MCF 10A (cell line): ENCODE measurements at regions of chr5 and their contacts with region 1.

Region 1: GRCh38 chr5:136212252-136212721 is 19.3 kb upstream of the SMIM32 start:
- DNase-seq: peak; percentile 73
- H3K4me3 Mint-ChIP-seq: no peak overlapping the region
- H3K27ac Mint-ChIP-seq: no peak overlapping the region
- H3K4me1 Mint-ChIP-seq: peaks cover 5% of the 10 kb centered on the region
- H3K27me3 Mint-ChIP-seq: peaks cover 13% of the 10 kb centered on the region
- CTCF ChIP-seq: peak; percentile 96

Region 2: GRCh38 chr5:135880278-135880677 is 332.0 kb before region 1 on chr5:
- CTCF ChIA-PET with region 1: interaction called, 37 read pairs
- POLR2A ChIA-PET with region 1: no interaction called
- intact Hi-C with region 1: no loop called
- DNase-seq: peak; percentile 45
- H3K4me3 Mint-ChIP-seq: no peak overlapping the region
- H3K27ac Mint-ChIP-seq: no peak overlapping the region
- H3K4me1 Mint-ChIP-seq: peaks cover 10% of the 10 kb centered on the region
- H3K27me3 Mint-ChIP-seq: peaks cover 32% of the 10 kb centered on the region
- CTCF ChIP-seq: peak; percentile 10

Region 3: GRCh38 chr5:135895551-135895950 is 316.7 kb before region 1 on chr5 and contains the start of gene IL9:
- CTCF ChIA-PET with region 1: interaction called, 23 read pairs
- POLR2A ChIA-PET with region 1: interaction called, 4 read pairs
- intact Hi-C with region 1: no loop called
- DNase-seq: no peak
- H3K4me3 Mint-ChIP-seq: no peak within 1 kb of the TSS
- H3K27ac Mint-ChIP-seq: no peak within 1 kb of the TSS
- H3K4me1 Mint-ChIP-seq: no peaks in the 10 kb centered on the region
- H3K27me3 Mint-ChIP-seq: peaks cover 64% of the 10 kb centered on the region
- CTCF ChIP-seq: no peak
- total RNA-seq, gene IL9: not detected in 2 replicates

Region 4: GRCh38 chr5:135944967-135945560 is 267.2 kb before region 1 on chr5:
- CTCF ChIA-PET with region 1: interaction called, 16 read pairs
- POLR2A ChIA-PET with region 1: no interaction called
- intact Hi-C with region 1: no loop called
- DNase-seq: peak; percentile 94
- H3K4me3 Mint-ChIP-seq: no peak overlapping the region
- H3K27ac Mint-ChIP-seq: no peak overlapping the region
- H3K4me1 Mint-ChIP-seq: no peaks in the 10 kb centered on the region
- H3K27me3 Mint-ChIP-seq: no peaks in the 10 kb centered on the region
- CTCF ChIP-seq: peak; percentile 80

Region 5: GRCh38 chr5:136155761-136156160 is 56.5 kb before region 1 on chr5:
- CTCF ChIA-PET with region 1: interaction called, 10 read pairs
- POLR2A ChIA-PET with region 1: no interaction called
- intact Hi-C with region 1: no loop called
- DNase-seq: peak; percentile 48
- H3K4me3 Mint-ChIP-seq: no peak overlapping the region
- H3K27ac Mint-ChIP-seq: no peak overlapping the region
- H3K4me1 Mint-ChIP-seq: peaks cover 24% of the 10 kb centered on the region
- H3K27me3 Mint-ChIP-seq: no peaks in the 10 kb centered on the region
- CTCF ChIP-seq: no peak

Region 6: GRCh38 chr5:136195971-136196820 is 16.1 kb before region 1 on chr5:
- CTCF ChIA-PET with region 1: interaction called, 65 read pairs
- POLR2A ChIA-PET with region 1: no interaction called
- intact Hi-C with region 1: no loop called
- DNase-seq: no peak
- H3K4me3 Mint-ChIP-seq: no peak overlapping the region
- H3K27ac Mint-ChIP-seq: no peak overlapping the region
- H3K4me1 Mint-ChIP-seq: no peaks in the 10 kb centered on the region
- H3K27me3 Mint-ChIP-seq: peaks cover 34% of the 10 kb centered on the region
- CTCF ChIP-seq: no peak

Region 7: DNA sequence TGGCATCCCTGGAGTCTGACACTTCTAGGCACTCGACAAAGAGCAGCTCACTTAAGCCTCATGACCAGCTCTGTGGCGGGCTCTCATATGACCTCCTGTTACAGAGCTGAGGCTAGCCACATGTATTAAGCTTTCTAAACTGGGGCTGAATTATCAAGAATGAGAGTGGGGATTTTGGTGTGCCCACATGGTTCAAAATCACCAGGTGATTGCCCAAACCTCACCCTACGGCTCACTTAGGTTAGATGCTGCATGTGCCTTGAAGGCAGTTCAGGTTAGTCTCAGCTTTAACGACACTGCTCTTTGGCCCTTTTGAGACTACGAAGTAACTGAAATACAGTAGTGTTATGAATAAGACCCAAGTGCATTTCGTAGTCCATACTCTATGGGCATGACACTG is 20.0 kb after region 1 on chr5:
- CTCF ChIA-PET with region 1: interaction called, 78 read pairs
- POLR2A ChIA-PET with region 1: interaction called, 3 read pairs
- intact Hi-C with region 1: no loop called
- DNase-seq: no peak
- H3K4me3 Mint-ChIP-seq: no peak overlapping the region
- H3K27ac Mint-ChIP-seq: no peak overlapping the region
- H3K4me1 Mint-ChIP-seq: no peaks in the 10 kb centered on the region
- H3K27me3 Mint-ChIP-seq: peaks cover 40% of the 10 kb centered on the region
- CTCF ChIP-seq: no peak

Region 8: DNA sequence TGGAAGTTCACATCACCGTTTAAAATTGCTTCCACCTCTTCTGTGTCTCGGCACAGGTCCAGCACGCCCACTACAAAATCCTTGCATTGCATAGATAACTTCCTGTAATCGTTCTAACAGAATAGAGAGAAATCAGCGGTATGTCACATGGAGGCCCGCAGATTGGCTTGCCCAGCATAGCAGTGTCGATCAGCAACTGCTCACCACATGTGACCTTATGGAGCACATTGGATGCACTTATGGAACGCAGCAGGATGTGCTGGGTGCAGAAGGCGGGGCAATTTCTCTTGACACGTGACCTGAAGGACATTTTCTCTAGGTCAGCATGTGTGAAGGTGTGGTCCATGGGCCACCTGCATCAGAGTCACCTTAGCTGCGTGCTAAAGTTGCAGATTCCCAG is 103.4 kb after region 1 on chr5:
- CTCF ChIA-PET with region 1: no interaction called
- POLR2A ChIA-PET with region 1: no interaction called
- intact Hi-C with region 1: no loop called
- DNase-seq: no peak
- H3K4me3 Mint-ChIP-seq: no peak overlapping the region
- H3K27ac Mint-ChIP-seq: no peak overlapping the region
- H3K4me1 Mint-ChIP-seq: no peaks in the 10 kb centered on the region
- H3K27me3 Mint-ChIP-seq: peaks cover 32% of the 10 kb centered on the region
- CTCF ChIP-seq: no peak

Region 9: GRCh38 chr5:136356747-136357469 is 144.6 kb after region 1 on chr5:
- CTCF ChIA-PET with region 1: no interaction called
- POLR2A ChIA-PET with region 1: no interaction called
- intact Hi-C with region 1: no loop called
- DNase-seq: no peak
- H3K4me3 Mint-ChIP-seq: no peak overlapping the region
- H3K27ac Mint-ChIP-seq: no peak overlapping the region
- H3K4me1 Mint-ChIP-seq: no peaks in the 10 kb centered on the region
- H3K27me3 Mint-ChIP-seq: peaks cover 52% of the 10 kb centered on the region
- CTCF ChIP-seq: no peak